MCF 10A (cell line): ENCODE measurements at regions of chr1 and their contacts with region 1.

Region 1: GRCh38 chr1:243246916-243247315 is 8.2 kb downstream of the CEP170 start:
- DNase-seq: no peak
- H3K4me3 Mint-ChIP-seq: no peak overlapping the region
- H3K27ac Mint-ChIP-seq: peak overlapping the region; percentile 20
- H3K4me1 Mint-ChIP-seq: peaks cover 55% of the 10 kb centered on the region
- H3K27me3 Mint-ChIP-seq: no peaks in the 10 kb centered on the region
- CTCF ChIP-seq: no peak

Region 2: DNA sequence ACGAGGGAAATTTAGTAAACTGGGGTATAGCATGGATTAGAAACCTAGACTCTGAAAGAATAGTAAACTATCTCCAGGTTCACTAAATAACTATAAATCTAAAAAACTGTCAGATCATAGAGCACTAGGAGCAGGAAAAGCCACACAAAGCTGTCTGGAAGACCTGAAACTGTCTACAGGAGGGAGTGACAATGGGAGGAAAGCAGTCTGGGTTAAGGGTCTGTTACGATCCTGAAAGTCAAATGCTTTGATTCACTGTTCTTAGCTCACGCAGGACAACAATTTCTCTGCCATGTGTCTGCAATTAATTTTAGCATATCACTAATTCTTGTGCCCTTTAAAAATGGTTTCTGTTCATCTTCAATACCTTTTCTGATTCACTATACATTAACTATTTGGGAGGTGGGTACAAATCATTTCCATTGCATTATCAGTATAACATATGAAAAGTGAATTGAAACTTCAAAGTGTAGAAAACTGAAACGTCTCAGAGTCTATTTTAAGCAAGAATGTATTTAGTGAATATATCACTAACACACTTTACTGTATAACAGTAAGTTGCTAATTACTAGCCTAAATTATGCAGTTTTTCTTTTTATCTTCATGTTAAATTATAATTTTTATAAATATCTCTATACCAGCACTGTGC is 10.2 kb before region 1 on chr1:
- CTCF ChIA-PET with region 1: interaction called, 11 read pairs
- POLR2A ChIA-PET with region 1: interaction called, 208 read pairs
- intact Hi-C with region 1: no loop called
- DNase-seq: no peak
- H3K4me3 Mint-ChIP-seq: no peak overlapping the region
- H3K27ac Mint-ChIP-seq: no peak overlapping the region
- H3K4me1 Mint-ChIP-seq: peaks cover 24% of the 10 kb centered on the region
- H3K27me3 Mint-ChIP-seq: no peaks in the 10 kb centered on the region
- CTCF ChIP-seq: no peak

Region 3: GRCh38 chr1:243482141-243483022 is 235.5 kb after region 1 on chr1:
- CTCF ChIA-PET with region 1: no interaction called
- POLR2A ChIA-PET with region 1: no interaction called
- intact Hi-C with region 1: no loop called
- DNase-seq: peak; percentile 47
- H3K4me3 Mint-ChIP-seq: no peak overlapping the region
- H3K27ac Mint-ChIP-seq: peak overlapping the region; percentile 42
- H3K4me1 Mint-ChIP-seq: peaks cover 17% of the 10 kb centered on the region
- H3K27me3 Mint-ChIP-seq: no peaks in the 10 kb centered on the region
- CTCF ChIP-seq: no peak